Prostate gland (tissue), 2 donors: ENCODE measurements at regions of chr14 and their contacts with region 1.

Region 1: DNA sequence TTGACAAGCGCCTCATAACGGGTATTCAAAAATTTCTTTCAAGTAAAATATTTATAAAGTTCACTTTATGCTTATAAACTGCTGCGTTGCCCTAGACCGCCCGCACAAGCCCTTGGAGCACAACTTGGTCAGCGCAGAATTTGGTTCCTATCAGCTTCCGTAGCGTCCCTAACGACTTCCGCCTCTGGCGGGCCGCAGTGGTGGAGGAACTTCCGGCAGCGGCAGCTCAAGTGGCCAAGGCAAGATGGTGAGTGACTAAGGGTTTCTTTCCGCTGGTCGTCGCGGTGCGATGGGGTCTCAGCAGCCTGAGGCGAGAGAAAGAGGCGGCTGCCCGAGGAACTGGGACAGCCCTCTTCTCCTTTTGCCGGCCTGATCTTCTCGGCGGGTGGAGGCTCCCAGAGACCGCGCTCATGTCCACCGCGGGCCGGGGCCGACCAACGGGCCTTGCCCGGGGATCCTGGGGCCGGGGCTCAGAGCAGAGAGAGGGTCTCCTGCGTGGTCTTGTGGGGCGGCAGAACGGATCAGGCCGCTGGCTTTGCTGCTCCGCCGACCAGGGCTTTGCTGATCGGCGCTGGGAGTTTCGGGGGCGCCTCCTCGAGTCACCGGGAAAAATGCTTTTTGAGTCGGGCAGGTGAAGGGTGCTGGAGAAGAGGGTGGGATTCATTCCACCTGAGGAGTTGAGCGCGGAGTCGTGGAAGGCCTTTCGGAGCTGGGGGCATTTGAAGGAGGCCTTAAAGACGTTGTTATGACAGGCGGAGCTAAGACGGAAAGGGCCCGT is at the start of gene PSMC1:
- DNase-seq: peak; percentile 85
- H3K4me3 ChIP-seq: peak within 1 kb of the TSS; percentile 90 to 96
- H3K27ac ChIP-seq: peak within 1 kb of the TSS; percentile 72 to 74
- H3K4me1 ChIP-seq: no peaks in the 10 kb centered on the region
- H3K27me3 ChIP-seq: no peaks in the 10 kb centered on the region
- CTCF ChIP-seq: peak in 1 of 4 experiments; percentile 38
- POLR2A ChIP-seq: no peak
- total RNA-seq, gene PSMC1: 77.4 to 94.3 TPM

Region 2: GRCh38 chr14:90331497-90332435 is 75.2 kb after region 1 on chr14 and contains the start of gene NRDE2:
- intact Hi-C with region 1: loop called (anchors 5 kb)
- DNase-seq: peak; percentile 96
- H3K4me3 ChIP-seq: peak within 1 kb of the TSS; percentile 59 to 69
- H3K27ac ChIP-seq: peak within 1 kb of the TSS; percentile 71 to 90
- H3K4me1 ChIP-seq: no peaks in the 10 kb centered on the region
- H3K27me3 ChIP-seq: no peaks in the 10 kb centered on the region
- CTCF ChIP-seq: peak in 2 of 4 experiments; percentile 17
- POLR2A ChIP-seq: no peak
- total RNA-seq, gene NRDE2: 18.8 to 21.5 TPM

Region 3: GRCh38 chr14:90383075-90383730 is 126.7 kb after region 1 on chr14:
- intact Hi-C with region 1: loop called (anchors 5 kb)
- DNase-seq: peak; percentile 100
- H3K4me3 ChIP-seq: peak overlapping the region; percentile 49 to 63
- H3K27ac ChIP-seq: peak overlapping the region; percentile 99 to 100
- H3K4me1 ChIP-seq: peaks cover 9% of the 10 kb centered on the region
- H3K27me3 ChIP-seq: no peaks in the 10 kb centered on the region
- CTCF ChIP-seq: peak in 2 of 4 experiments; percentile 34 to 39
- POLR2A ChIP-seq: peak; percentile 93